Common myeloid progenitor, CD34-positive (primary cell): ENCODE measurements at regions of chr22 and their contacts with region 1.

Region 1: GRCh38 chr22:40487663-40488249 is 117.4 kb downstream of the SGSM3 start:
- DNase-seq: peak; percentile 30 to 61 (median 61)
- H3K4me3 ChIP-seq: no peak overlapping the region
- H3K27ac ChIP-seq: no peak overlapping the region
- H3K4me1 ChIP-seq: peaks cover 20 to 29% (median 23%) of the 10 kb centered on the region in 4 experiments
- H3K27me3 ChIP-seq: no peaks in the 10 kb centered on the region

Region 2: GRCh38 chr22:40426594-40427333 is 61.0 kb before region 1 on chr22:
- CTCF ChIA-PET with region 1: interaction called, 31 read pairs
- POLR2A ChIA-PET with region 1: no interaction called
- DNase-seq: no peak
- H3K4me3 ChIP-seq: no peak overlapping the region
- H3K27ac ChIP-seq: peak overlapping the region in 1 of 2 experiments; percentile 18
- H3K4me1 ChIP-seq: peaks cover 0 to 15% (median 3%) of the 10 kb centered on the region in 4 experiments
- H3K27me3 ChIP-seq: no peaks in the 10 kb centered on the region

Region 3: DNA sequence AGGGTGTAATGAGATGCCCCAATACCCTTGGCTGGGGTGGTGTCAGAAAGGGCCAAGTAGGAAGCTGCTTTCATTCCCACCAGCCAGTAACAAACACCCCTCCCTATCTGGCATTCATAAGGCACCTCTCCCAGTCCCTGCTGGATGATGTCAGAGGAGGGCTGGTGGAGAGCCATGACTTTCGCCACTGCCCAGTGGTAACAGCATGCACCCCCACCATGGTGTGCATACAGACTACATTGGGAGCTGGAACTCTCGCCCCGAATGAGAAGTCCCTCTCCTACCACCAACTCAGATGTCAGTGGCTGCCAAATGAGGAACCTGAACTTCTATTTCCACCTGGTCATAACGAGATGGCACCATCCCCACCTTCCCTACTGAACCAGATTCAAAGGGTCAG is 44.0 kb before region 1 on chr22:
- CTCF ChIA-PET with region 1: interaction called, 36 read pairs
- POLR2A ChIA-PET with region 1: no interaction called
- DNase-seq: peak in 1 of 3 donors; percentile 27
- H3K4me3 ChIP-seq: no peak overlapping the region
- H3K27ac ChIP-seq: no peak overlapping the region
- H3K4me1 ChIP-seq: peaks cover 0 to 11% (median 5%) of the 10 kb centered on the region in 4 experiments
- H3K27me3 ChIP-seq: no peaks in the 10 kb centered on the region